AG04450 (cell line): ENCODE measurements at regions of chr10 and their contacts with region 1.

Region 1: GRCh38 chr10:58414270-58415041 is 29.2 kb downstream of the TFAM start:
- DNase-seq: peak; percentile 50
- H3K4me3 ChIP-seq: no peak overlapping the region
- H3K27ac ChIP-seq: no peak overlapping the region
- H3K27me3 ChIP-seq: no peaks in the 10 kb centered on the region
- CTCF ChIP-seq: peak; percentile 64

Region 2: GRCh38 chr10:58508316-58508715 is 93.9 kb after region 1 on chr10:
- CTCF ChIA-PET with region 1: interaction called, 16 read pairs
- POLR2A ChIA-PET with region 1: interaction called, 3 read pairs
- DNase-seq: peak; percentile 76
- H3K4me3 ChIP-seq: no peak overlapping the region
- H3K27ac ChIP-seq: no peak overlapping the region
- H3K27me3 ChIP-seq: no peaks in the 10 kb centered on the region
- CTCF ChIP-seq: no peak

Region 3: DNA sequence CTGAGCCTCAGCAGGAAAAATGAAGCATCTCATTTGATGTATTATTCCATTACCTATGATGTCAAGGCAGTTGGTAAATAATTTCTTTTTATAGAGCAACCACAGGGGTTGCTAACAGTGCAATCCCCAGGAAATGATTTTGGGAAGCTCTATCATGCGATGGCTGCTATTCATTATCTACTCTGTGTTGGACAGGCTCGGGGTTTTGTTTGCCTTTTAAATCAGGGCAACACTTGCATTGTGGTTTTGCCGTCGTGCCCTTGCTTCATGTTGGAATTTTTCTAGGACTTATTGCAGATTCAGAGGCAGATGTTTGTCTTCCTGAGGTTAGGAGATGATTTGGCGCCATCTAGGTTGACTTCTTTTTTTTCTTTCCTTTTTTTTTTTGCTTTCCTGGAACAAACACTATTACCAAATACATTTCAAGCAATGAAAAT is 226.7 kb after region 1 on chr10:
- CTCF ChIA-PET with region 1: interaction called, 14 read pairs
- POLR2A ChIA-PET with region 1: no interaction called
- DNase-seq: peak; percentile 87
- H3K4me3 ChIP-seq: no peak overlapping the region; the same call in 1 of the 2 replicates
- H3K27ac ChIP-seq: no peak overlapping the region
- H3K27me3 ChIP-seq: no peaks in the 10 kb centered on the region
- CTCF ChIP-seq: peak; percentile 39

Region 4: DNA sequence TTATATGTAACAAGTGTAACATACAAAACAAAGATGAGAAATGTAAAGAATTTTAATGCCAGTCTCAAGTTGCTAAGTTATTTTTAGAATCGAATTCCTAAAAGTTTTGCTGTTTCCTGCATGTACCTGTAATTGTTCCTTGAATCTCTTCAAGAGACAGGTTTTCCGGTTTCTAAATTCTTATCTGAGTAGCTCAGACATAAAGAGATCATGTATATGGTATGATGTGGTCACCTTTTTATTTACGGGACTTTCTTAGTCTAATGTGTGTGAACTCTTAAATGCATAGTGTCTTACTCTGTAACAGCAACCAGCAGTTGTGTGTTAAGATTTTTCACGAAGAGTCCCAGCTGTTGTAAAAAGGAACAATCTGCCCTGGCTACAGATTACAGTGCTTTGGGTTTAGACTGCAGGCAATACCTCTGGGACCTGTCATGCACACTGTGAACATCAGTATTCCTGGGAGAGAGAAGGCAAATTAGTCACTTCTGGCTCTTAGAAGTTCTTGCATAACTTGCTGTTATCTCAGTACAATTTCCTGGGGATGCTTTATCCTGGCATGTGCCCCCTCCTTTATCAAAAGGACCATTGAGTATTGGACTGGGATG is 361.6 kb after region 1 on chr10:
- CTCF ChIA-PET with region 1: interaction called, 31 read pairs
- POLR2A ChIA-PET with region 1: no interaction called
- DNase-seq: peak; percentile 33
- H3K4me3 ChIP-seq: no peak overlapping the region
- H3K27ac ChIP-seq: peak overlapping the region; percentile 32
- H3K27me3 ChIP-seq: no peaks in the 10 kb centered on the region
- CTCF ChIP-seq: no peak